ENCODE measurements at regions of chr20 and their contacts with region 1.

Region 1: DNA sequence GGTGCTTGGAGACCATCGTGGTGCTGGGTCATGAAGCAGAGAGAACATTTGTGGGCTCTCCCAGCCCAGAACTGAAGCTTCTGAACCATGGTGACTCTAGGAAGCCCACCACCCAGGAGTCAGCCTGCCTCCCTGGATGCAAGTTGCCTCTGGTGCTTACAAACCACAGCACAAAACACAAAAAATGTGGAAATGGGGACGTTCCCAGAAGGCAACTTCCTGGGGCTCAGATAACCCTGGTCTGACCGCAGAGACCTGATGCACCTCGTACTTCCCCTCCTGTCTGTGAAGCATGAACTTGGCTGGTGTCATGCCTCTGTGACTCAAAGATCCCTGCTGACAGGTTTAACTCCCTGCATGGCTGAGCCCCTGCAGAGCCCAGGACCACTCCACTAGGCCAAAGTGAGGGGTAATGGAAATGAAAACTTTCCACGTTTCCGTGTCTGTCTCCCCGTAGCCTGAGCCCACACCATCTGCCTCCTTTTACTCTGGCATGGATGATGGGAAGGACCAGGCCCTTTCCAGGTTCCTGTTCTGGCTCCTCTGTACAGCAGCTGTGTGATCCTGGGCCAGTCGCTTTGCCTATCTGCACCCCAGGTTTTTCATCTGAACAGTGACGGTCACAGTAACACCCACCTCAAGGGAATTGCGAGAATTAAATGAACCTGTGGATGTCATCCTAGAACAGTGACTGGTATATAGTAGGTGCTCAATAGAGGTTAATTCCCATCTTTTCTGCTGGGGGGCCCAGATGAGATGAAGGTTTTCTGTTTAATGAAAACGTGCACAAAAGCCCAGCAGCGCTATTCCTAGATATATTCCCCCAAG is 57.7 kb downstream of the PPP1R16B start:
- DNase-seq: peak in 1 of 2 experiments; percentile 37
- H3K4me3 ChIP-seq: no peak overlapping the region
- H3K4me3 Mint-ChIP-seq: no peak overlapping the region
- H3K27ac Mint-ChIP-seq: no peak overlapping the region
- H3K4me1 ChIP-seq: no peaks in the 10 kb centered on the region
- H3K4me1 Mint-ChIP-seq: no peaks in the 10 kb centered on the region
- H3K27me3 ChIP-seq: 0 out of 2 replicates have a peak, but pooled peaks cover 2% of the 10 kb centered on the region
- H3K27me3 Mint-ChIP-seq: no peaks in the 10 kb centered on the region
- CTCF ChIP-seq: no peak

Region 2: DNA sequence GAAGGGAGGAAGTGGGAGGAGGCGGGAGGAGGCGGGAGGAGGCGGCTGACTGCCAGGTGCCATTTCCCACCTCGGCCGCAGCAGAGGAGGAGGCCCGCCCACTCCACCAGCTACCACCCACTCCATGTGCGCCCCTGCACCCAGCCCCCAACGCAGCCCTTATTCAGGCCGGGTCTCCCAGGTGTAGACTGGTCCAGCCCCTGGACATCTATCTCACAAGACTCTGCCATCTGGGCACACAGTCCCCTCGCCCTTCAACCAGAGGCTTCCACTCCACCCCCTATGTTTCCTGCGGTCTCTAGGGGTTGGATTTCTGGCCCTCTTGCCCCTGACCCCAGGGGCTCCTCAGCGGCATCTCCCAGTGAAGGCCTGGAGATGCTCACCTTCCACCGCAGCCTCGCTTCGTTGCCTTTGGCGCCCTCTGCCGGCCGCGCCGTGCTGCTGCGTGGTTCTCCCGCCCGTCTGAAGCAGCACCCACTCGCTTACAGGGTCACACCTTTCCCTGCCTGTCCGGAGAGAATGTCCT is 30.4 kb after region 1 on chr20:
- CTCF ChIA-PET with region 1: interaction called, 5 read pairs
- POLR2A ChIA-PET with region 1: no interaction called
- intact Hi-C with region 1: loop called (anchors 1 kb)
- DNase-seq: peak; percentile 84 to 91
- H3K4me3 ChIP-seq: peak overlapping the region; percentile 27
- H3K4me3 Mint-ChIP-seq: peak overlapping the region; percentile 60
- H3K27ac Mint-ChIP-seq: no peak overlapping the region
- H3K4me1 ChIP-seq: peaks cover 3% of the 10 kb centered on the region; the same call in 1 of the 2 replicates
- H3K4me1 Mint-ChIP-seq: peaks cover 17% of the 10 kb centered on the region
- H3K27me3 ChIP-seq: no peaks in the 10 kb centered on the region; the same call in 1 of the 2 replicates
- H3K27me3 Mint-ChIP-seq: peaks cover 6% of the 10 kb centered on the region
- CTCF ChIP-seq: peak; percentile 100

Region 3: GRCh38 chr20:38935285-38935684 is 72.0 kb after region 1 on chr20:
- CTCF ChIA-PET with region 1: no interaction called
- POLR2A ChIA-PET with region 1: no interaction called
- intact Hi-C with region 1: loop called (anchors 1 kb)
- DNase-seq: peak; percentile 27 to 43
- H3K4me3 ChIP-seq: no peak overlapping the region
- H3K4me3 Mint-ChIP-seq: no peak overlapping the region
- H3K27ac Mint-ChIP-seq: no peak overlapping the region
- H3K4me1 ChIP-seq: peaks cover 14% of the 10 kb centered on the region
- H3K4me1 Mint-ChIP-seq: peaks cover 33% of the 10 kb centered on the region
- H3K27me3 ChIP-seq: no peaks in the 10 kb centered on the region
- H3K27me3 Mint-ChIP-seq: no peaks in the 10 kb centered on the region
- CTCF ChIP-seq: peak; percentile 37

Measured in Caco-2 (cell line).